Transverse colon (tissue), 4 donors: ENCODE measurements at regions of chr13 and their contacts with region 1.

Region 1: GRCh38 chr13:78121459-78122348 is 203.1 kb upstream of the EDNRB start:
- DNase-seq: peak; percentile 16
- H3K4me3 ChIP-seq: no peak overlapping the region
- H3K27ac ChIP-seq: no peak overlapping the region
- H3K4me1 ChIP-seq: no peaks in the 10 kb centered on the region
- H3K27me3 ChIP-seq: no peaks in the 10 kb centered on the region
- CTCF ChIP-seq: peak; percentile 72 to 86 (median 82)
- EP300 ChIP-seq: no peak
- POLR2A ChIP-seq: no peak

Region 2: DNA sequence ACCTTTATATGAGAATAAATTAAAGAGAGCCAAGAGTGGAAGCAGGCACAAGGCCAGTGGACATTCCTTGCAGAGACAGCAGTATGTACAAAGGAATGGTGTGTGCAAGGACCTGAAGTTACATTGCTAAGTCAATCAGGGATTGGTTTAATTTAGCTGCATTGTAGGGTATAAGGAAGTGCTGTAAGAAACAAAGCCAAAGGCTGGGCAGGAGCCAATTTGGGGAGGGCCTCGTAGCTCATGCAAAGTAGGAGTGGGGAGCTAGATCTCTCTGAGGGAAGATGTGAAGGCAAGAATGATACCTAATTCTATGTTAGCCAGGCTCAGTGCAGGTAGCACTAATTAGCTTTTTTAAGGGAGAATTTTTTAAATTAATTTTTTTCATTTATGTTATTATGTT is 347.5 kb before region 1 on chr13:
- in situ Hi-C with region 1: loop called in 2 of 4 experiments (anchors 5 to 10 kb)
- intact Hi-C with region 1: no loop called
- DNase-seq: no peak
- H3K4me3 ChIP-seq: no peak overlapping the region
- H3K27ac ChIP-seq: no peak overlapping the region
- H3K4me1 ChIP-seq: no peaks in the 10 kb centered on the region
- H3K27me3 ChIP-seq: no peaks in the 10 kb centered on the region
- CTCF ChIP-seq: no peak
- EP300 ChIP-seq: no peak
- POLR2A ChIP-seq: no peak

Region 3: DNA sequence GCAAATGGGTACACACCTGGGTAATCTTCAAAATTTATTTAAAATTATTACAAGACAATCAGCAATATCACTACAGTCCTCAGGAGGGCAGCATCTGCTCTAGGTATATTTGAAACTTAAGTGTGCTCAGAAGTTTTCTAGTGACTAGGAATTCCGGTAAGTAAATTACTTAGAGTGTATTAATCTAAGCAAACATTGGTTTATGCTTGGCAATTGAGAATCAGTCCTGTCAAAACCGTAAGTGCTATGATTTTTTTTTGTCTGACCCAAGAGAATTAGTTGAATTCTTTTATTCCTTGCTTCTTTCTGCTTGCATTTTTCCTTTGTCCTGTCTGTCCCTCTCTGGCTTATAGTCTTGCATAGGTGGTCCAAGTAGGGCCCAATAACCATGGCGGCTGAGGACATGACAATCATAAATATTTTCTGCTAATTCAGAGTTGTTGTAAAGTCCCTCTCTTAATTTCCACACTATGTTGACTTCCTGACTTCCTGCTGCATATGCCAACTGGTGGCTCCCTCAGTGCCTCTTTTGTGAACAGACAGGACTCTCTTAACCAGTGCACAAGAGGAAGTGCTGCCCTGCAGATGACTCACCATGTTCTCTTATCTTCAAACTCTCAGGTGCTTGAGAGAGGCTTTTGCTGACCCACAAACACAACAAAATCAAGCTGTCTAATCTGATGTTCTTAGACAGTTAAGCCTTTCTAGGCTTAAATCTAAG is 342.0 kb before region 1 on chr13:
- in situ Hi-C with region 1: loop called in 2 of 4 experiments (anchors 5 to 10 kb)
- intact Hi-C with region 1: loop called (anchors 10 kb)
- DNase-seq: peak; percentile 11
- H3K4me3 ChIP-seq: no peak overlapping the region
- H3K27ac ChIP-seq: no peak overlapping the region
- H3K4me1 ChIP-seq: peaks cover 0 to 5% (median 4%) of the 10 kb centered on the region in 4 donors
- H3K27me3 ChIP-seq: no peaks in the 10 kb centered on the region
- CTCF ChIP-seq: peak; percentile 42 to 65 (median 55)
- EP300 ChIP-seq: no peak
- POLR2A ChIP-seq: no peak

Region 4: DNA sequence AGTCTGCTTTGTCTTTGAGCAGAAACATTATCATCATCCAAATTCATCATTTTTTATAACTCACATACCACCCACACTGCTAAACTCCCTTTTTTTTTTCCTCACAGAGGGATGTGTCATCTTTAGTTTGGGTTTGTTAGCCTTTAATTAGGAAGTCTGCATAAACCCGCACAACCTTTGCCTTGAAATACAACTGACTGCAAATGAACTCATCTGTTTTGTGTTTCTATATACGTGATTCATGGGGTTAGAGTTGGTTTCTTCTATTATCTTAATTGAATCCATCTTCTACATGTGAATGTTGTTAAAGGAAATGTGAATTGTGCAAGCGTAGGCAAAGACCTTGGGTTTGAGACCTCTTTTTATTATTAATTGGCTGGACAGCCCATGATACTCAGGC is 321.5 kb before region 1 on chr13:
- in situ Hi-C with region 1: loop called in 1 of 4 experiments (anchors 10 kb)
- intact Hi-C with region 1: no loop called
- DNase-seq: no peak
- H3K4me3 ChIP-seq: no peak overlapping the region
- H3K27ac ChIP-seq: no peak overlapping the region
- H3K4me1 ChIP-seq: no peaks in the 10 kb centered on the region
- H3K27me3 ChIP-seq: no peaks in the 10 kb centered on the region
- CTCF ChIP-seq: no peak
- EP300 ChIP-seq: no peak
- POLR2A ChIP-seq: no peak